OCI-LY7 (cell line): ENCODE measurements at regions of chr1 and their contacts with region 1.

Region 1: GRCh38 chr1:36369061-36369861 is 16.5 kb downstream of the STK40 start:
- DNase-seq: peak; percentile 83
- H3K4me3 ChIP-seq: no peak overlapping the region
- H3K27ac ChIP-seq: peak overlapping the region; percentile 48
- H3K4me1 ChIP-seq: peaks cover 76% of the 10 kb centered on the region
- CTCF ChIP-seq: peak; percentile 96

Region 2: DNA sequence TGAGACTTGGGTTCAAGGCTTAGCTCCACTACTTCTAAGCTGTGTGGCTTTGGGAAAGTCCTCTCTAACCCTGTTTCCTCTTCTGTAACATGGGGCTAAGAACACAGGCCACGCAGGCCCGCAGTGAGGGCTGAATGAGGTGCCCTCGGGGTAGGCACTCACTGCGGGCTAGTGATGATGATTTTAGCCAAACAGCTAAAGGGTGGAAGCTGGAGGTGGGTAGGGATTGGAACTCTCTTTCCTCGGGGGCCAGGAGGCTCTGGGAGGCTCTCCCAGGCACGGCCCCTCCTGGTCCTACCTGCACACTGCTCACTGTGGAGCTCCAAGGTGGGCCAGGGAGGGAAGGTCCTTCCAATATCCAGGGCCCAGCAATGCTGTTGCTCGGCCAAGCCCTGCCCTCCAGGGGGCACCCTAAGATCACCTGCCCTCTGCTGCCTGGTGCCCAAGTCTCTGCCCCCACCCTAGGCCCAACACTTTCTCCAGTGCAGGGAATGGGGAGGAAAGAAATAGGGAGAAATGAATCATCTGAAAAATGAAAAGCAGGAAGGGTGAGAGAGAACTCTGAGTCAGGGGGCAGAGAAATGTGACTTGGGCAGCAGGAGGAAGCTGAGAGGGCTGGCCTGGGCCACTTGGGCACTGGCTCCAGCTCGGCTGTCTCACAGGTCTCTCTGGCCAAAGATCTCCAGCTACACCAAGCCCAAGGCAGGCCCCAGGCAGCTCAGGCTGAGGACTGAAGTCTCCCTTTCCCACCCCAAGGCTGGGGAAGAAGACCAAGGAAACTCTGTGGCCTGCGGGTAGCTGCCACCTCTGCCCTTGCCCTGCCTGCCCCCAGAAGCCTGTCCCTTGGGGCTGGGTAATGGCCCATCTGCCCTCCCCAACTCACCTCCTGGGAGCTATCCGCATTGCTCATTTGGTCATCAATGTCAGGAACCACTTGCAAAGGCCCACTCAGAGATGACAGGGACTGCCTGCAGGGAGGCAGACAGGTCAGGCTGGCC is 26.5 kb before region 1 on chr1:
- CTCF ChIA-PET with region 1: interaction called, 7 read pairs
- POLR2A ChIA-PET with region 1: no interaction called
- intact Hi-C with region 1: loop called (anchors 1 kb)
- DNase-seq: peak; percentile 55
- H3K4me3 ChIP-seq: no peak overlapping the region
- H3K27ac ChIP-seq: no peak overlapping the region
- H3K4me1 ChIP-seq: peaks cover 9% of the 10 kb centered on the region
- CTCF ChIP-seq: peak; percentile 81